ENCODE measurements at regions of chr19 and their contacts with region 1.

Region 1: GRCh38 chr19:43584484-43584883 is 8.9 kb downstream of the PINLYP start:
- DNase-seq: no peak
- ATAC-seq: no peak
- H3K4me3 ChIP-seq: no peak overlapping the region
- H3K27ac ChIP-seq: no peak overlapping the region
- H3K4me1 ChIP-seq: no peaks in the 10 kb centered on the region
- H3K27me3 ChIP-seq: no peaks in the 10 kb centered on the region
- CTCF ChIP-seq: no peak

Region 2: DNA sequence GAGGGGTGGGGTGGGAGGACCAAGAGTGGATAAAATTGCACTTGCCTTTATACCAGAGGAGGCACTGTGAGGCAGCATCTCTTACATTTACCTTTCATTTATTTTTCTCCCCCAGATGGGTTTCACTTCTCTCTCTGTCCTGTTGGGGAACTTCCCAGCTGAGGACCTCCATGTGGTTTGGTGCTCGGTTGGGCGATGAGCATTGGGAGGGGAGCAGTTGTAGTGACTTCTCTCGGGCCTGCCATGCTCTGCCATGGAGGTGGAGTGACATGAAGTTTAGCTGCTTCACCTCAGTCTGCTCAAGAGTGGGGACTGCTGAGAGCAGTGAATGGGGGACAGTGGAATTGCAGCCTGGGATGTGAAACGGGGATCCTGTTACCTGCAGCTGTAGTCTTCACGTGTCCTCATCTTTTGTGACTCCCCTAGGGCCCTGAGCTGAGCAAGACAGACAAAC is 1118.6 kb before region 1 on chr19:
- CTCF ChIA-PET with region 1: interaction called, 11 read pairs
- POLR2A ChIA-PET with region 1: no interaction called
- in situ Hi-C with region 1: no loop called
- intact Hi-C with region 1: no loop called
- DNase-seq: no peak
- ATAC-seq: no peak
- H3K4me3 ChIP-seq: no peak overlapping the region
- H3K27ac ChIP-seq: no peak overlapping the region
- H3K4me1 ChIP-seq: 0 out of 2 replicates have a peak, but pooled peaks cover 2% of the 10 kb centered on the region
- H3K27me3 ChIP-seq: no peaks in the 10 kb centered on the region
- CTCF ChIP-seq: no peak

Region 3: GRCh38 chr19:43595999-43596841 is 11.7 kb after region 1 on chr19 and contains the starts of genes IRGQ and ZNF576:
- CTCF ChIA-PET with region 1: no interaction called
- POLR2A ChIA-PET with region 1: no interaction called
- in situ Hi-C with region 1: no loop called
- intact Hi-C with region 1: no loop called
- DNase-seq: peak; percentile 93
- ATAC-seq: peak; percentile 93
- H3K4me3 ChIP-seq: peak within 1 kb of the TSS; percentile 82 to 95
- H3K27ac ChIP-seq: peak within 1 kb of the TSS; percentile 93
- H3K4me1 ChIP-seq: peaks cover 7% of the 10 kb centered on the region; the same call in 1 of the 2 replicates
- H3K27me3 ChIP-seq: no peaks in the 10 kb centered on the region
- CTCF ChIP-seq: no peak
- total RNA-seq, gene IRGQ: 20.4 TPM
- total RNA-seq, gene ZNF576: 14.1 TPM

Measured in Panc1 (cell line).